Endothelial cell of umbilical vein (primary cell): ENCODE measurements at regions of chr2 and their contacts with region 1.

Region 1: DNA sequence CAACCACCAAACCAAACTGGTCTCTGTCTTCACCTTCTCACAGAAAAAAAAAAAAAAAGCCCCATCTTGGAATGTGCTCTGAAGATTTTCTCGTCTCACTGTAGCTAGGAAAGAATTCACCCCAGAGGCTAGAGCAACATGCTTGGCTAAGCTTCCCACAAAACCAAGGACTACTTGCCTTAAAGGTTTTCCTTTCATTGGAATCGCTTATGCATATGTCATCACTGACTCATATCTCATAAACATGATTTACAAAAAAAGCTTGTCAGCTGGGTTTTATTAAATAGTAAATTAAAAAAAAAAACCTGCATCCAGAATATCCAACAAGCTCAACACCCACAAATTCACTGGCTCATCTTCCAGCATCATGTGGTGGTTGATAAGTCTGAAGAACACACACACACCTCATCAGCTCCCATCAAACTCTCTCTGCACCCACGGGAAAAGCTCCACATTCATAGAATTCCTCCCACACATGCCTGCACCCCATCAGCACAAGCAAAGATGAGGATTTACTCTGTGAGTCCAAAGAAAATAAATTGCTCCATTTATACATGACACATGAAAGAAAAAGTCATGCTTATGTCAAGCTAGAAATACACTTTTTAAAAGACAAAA is 182.0 kb upstream of the TRIB2 start:
- DNase-seq: no peak
- H3K4me3 ChIP-seq: no peak overlapping the region
- H3K27ac ChIP-seq: no peak overlapping the region
- H3K4me1 ChIP-seq: no peaks in the 10 kb centered on the region
- H3K27me3 ChIP-seq: no peaks in the 10 kb centered on the region
- CTCF ChIP-seq: no peak
- POLR2A ChIP-seq: no peak

Region 2: GRCh38 chr2:12613137-12613835 is 78.5 kb after region 1 on chr2:
- CTCF ChIA-PET with region 1: no interaction called
- POLR2A ChIA-PET with region 1: no interaction called
- dilution Hi-C with region 1: no loop called
- intact Hi-C with region 1: loop called (anchors 5 kb)
- DNase-seq: no peak
- H3K4me3 ChIP-seq: no peak overlapping the region
- H3K27ac ChIP-seq: no peak overlapping the region
- H3K4me1 ChIP-seq: no peaks in the 10 kb centered on the region
- H3K27me3 ChIP-seq: no peaks in the 10 kb centered on the region
- CTCF ChIP-seq: no peak
- POLR2A ChIP-seq: no peak